Activated CD8-positive, alpha-beta T cell treated with anti-CD3 and anti-CD28 coated beads for 36 hours (primary cell): ENCODE measurements at regions of chr10 and their contacts with region 1.

Region 1: GRCh38 chr10:33155720-33156638 is 178.5 kb downstream of the NRP1 start:
- DNase-seq: peak; percentile 36
- ATAC-seq: peak; percentile 83
- H3K4me3 Mint-ChIP-seq: no peak overlapping the region
- H3K27ac Mint-ChIP-seq: no peak overlapping the region
- H3K4me1 Mint-ChIP-seq: peaks cover 27% of the 10 kb centered on the region
- H3K27me3 Mint-ChIP-seq: peaks cover 4% of the 10 kb centered on the region
- CTCF ChIP-seq: peak; percentile 78

Region 2: GRCh38 chr10:32217216-32217615 is 938.8 kb before region 1 on chr10:
- CTCF ChIA-PET with region 1: no interaction called
- POLR2A ChIA-PET with region 1: no interaction called
- intact Hi-C with region 1: no loop called
- DNase-seq: no peak
- ATAC-seq: no peak
- H3K4me3 Mint-ChIP-seq: no peak overlapping the region
- H3K27ac Mint-ChIP-seq: no peak overlapping the region
- H3K4me1 Mint-ChIP-seq: no peaks in the 10 kb centered on the region
- H3K27me3 Mint-ChIP-seq: peaks cover 2% of the 10 kb centered on the region
- CTCF ChIP-seq: no peak

Region 3: DNA sequence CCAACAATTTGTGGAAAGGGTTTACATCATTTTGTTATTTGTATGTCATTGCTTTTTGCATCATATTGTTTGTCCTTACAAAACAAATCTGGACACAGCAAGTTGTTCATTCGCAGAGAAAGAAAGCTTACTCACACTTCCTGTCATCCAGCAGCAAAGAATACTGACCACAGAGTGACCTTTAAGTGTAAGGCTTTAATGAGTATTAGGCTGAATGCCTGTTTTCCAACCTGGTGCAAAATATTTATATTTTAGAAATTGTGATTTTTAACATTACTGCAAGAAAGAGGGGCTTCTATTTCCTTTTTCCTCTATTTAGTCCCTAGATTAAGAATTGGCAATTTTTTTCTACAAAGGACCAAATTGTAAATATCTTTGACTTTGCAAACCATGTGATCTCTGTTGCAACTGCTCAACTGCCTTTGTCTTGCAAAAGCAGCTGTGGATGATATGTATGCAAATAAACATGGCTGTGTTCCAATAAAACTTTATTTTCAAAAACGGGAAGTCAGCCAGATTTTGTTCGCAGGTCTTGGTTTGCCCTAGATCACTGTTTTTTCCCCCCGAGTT is 170.1 kb before region 1 on chr10:
- CTCF ChIA-PET with region 1: no interaction called
- POLR2A ChIA-PET with region 1: no interaction called
- intact Hi-C with region 1: no loop called
- DNase-seq: no peak
- ATAC-seq: no peak
- H3K4me3 Mint-ChIP-seq: no peak overlapping the region
- H3K27ac Mint-ChIP-seq: no peak overlapping the region
- H3K4me1 Mint-ChIP-seq: peaks cover 21% of the 10 kb centered on the region
- H3K27me3 Mint-ChIP-seq: no peaks in the 10 kb centered on the region
- CTCF ChIP-seq: no peak

Region 4: GRCh38 chr10:33008499-33009243 is 147.3 kb before region 1 on chr10:
- CTCF ChIA-PET with region 1: interaction called, 16 read pairs
- POLR2A ChIA-PET with region 1: no interaction called
- intact Hi-C with region 1: no loop called
- DNase-seq: peak; percentile 75
- ATAC-seq: peak; percentile 65
- H3K4me3 Mint-ChIP-seq: peak overlapping the region; percentile 59
- H3K27ac Mint-ChIP-seq: peak overlapping the region; percentile 68
- H3K4me1 Mint-ChIP-seq: peaks cover 27% of the 10 kb centered on the region
- H3K27me3 Mint-ChIP-seq: peaks cover 15% of the 10 kb centered on the region
- CTCF ChIP-seq: peak; percentile 99

Region 5: GRCh38 chr10:33115738-33116719 is 40.0 kb before region 1 on chr10:
- CTCF ChIA-PET with region 1: interaction called, 19 read pairs
- POLR2A ChIA-PET with region 1: interaction called, 3 read pairs
- intact Hi-C with region 1: loop called (anchors 1 kb)
- DNase-seq: peak; percentile 64
- ATAC-seq: no peak
- H3K4me3 Mint-ChIP-seq: no peak overlapping the region
- H3K27ac Mint-ChIP-seq: peak overlapping the region; percentile 59
- H3K4me1 Mint-ChIP-seq: peaks cover 78% of the 10 kb centered on the region
- H3K27me3 Mint-ChIP-seq: no peaks in the 10 kb centered on the region
- CTCF ChIP-seq: peak; percentile 65

Region 6: GRCh38 chr10:33174674-33175434 is 18.9 kb after region 1 on chr10:
- CTCF ChIA-PET with region 1: interaction called, 10 read pairs
- POLR2A ChIA-PET with region 1: no interaction called
- intact Hi-C with region 1: no loop called
- DNase-seq: no peak
- ATAC-seq: no peak
- H3K4me3 Mint-ChIP-seq: no peak overlapping the region
- H3K27ac Mint-ChIP-seq: no peak overlapping the region
- H3K4me1 Mint-ChIP-seq: no peaks in the 10 kb centered on the region
- H3K27me3 Mint-ChIP-seq: peaks cover 25% of the 10 kb centered on the region
- CTCF ChIP-seq: no peak

Region 7: GRCh38 chr10:33211106-33211878 is 55.3 kb after region 1 on chr10:
- CTCF ChIA-PET with region 1: no interaction called
- POLR2A ChIA-PET with region 1: no interaction called
- intact Hi-C with region 1: no loop called
- DNase-seq: peak; percentile 40
- ATAC-seq: peak; percentile 73
- H3K4me3 Mint-ChIP-seq: no peak overlapping the region
- H3K27ac Mint-ChIP-seq: peak overlapping the region; percentile 64
- H3K4me1 Mint-ChIP-seq: peaks cover 12% of the 10 kb centered on the region
- H3K27me3 Mint-ChIP-seq: no peaks in the 10 kb centered on the region
- CTCF ChIP-seq: no peak

Region 8: DNA sequence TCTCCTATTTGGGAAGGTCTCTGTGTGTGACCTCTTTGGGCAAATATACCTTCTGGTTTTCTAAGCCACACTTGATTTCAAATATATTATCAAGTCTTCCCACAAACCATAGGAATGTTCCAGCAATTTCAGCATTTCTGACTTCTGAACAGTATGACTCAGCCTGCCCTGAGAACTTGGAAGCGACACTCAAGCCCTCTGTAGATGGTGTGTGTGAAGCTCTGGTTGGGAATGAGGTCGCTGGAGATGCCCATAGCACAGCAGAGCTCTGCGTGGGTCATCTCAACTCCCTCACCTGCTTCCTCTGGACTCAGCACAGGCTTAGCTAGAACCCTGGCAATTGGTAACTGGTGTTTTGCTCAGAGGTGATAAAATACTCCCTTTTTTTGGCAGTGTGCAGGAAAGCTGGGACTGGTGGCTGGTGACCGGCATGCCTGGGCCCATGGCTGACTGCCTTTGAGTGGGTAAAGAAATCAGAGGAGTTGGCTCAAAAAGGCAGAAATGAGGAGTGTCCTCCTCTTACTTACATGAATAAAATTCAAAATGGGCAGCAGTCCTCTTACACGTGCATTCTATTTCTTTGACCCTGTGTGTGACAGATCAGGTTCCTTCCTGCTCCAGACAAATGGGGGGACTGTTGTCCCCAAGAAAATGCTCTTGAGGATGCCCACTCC is 265.9 kb after region 1 on chr10:
- CTCF ChIA-PET with region 1: no interaction called
- POLR2A ChIA-PET with region 1: no interaction called
- intact Hi-C with region 1: no loop called
- DNase-seq: no peak
- ATAC-seq: no peak
- H3K4me3 Mint-ChIP-seq: no peak overlapping the region
- H3K27ac Mint-ChIP-seq: no peak overlapping the region
- H3K4me1 Mint-ChIP-seq: no peaks in the 10 kb centered on the region
- H3K27me3 Mint-ChIP-seq: peaks cover 11% of the 10 kb centered on the region
- CTCF ChIP-seq: no peak